ENCODE measurements at regions of chr3 and their contacts with region 1.

Region 1: GRCh38 chr3:108221911-108222852 is at the start of gene IFT57:
- DNase-seq: peak; percentile 89 to 98 (median 96)
- ATAC-seq: peak; percentile 90
- H3K4me3 Mint-ChIP-seq: peak within 1 kb of the TSS; percentile 95 to 100 (median 99)
- H3K27ac Mint-ChIP-seq: peak within 1 kb of the TSS; percentile 99 to 100 (median 100)
- H3K4me1 Mint-ChIP-seq: peaks cover 22 to 72% (median 54%) of the 10 kb centered on the region in 4 donors
- H3K27me3 Mint-ChIP-seq: no peaks in the 10 kb centered on the region
- polyA plus RNA-seq, gene IFT57: 19.0 to 35.6 (median 27.0) TPM

Region 2: DNA sequence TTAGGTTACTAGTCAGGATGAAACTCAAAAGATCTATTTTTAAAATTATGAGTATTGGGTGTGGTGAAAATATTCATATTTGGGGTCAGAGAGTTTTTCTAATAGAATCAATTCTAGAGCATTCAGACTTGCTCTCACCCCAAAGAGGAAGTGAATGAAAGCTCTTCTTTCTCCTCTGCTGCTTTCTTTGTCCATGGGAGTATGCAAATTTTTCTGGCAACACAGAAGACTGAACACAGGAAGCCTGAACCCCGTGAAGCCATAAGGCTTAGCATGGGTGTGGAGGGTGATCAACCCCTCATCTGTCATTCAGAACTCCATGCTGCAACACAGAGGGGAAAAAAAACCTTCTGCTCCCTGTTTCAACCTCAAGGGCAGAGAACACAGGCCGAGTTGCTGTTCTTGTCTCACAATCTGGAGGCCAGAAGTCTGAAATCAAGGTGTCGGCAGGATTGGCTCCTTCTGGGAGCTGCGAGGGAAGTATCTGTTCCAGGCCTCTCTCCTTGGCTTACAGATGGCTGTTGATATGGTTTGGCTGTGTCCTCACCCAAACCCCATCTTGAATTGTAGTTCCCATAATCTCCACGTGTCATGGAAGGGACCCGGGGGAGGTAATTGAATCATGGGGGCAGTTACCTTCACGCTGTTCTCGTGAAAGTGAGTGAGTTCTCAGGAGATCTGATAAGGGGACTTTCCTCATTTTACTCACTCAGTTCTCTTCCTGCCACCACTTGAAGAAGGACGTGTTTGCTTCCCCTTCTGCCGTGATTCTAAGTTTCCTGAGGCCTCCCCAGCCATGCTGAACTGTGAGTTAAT is 97.6 kb before region 1 on chr3:
- POLR2A ChIA-PET with region 1: interaction called, 62 read pairs
- DNase-seq: peak; percentile 7 to 82 (median 64)
- ATAC-seq: peak; percentile 59 to 68
- H3K4me3 Mint-ChIP-seq: peak overlapping the region; percentile 73 to 98 (median 88)
- H3K27ac Mint-ChIP-seq: peak overlapping the region; percentile 95 to 100 (median 98)
- H3K4me1 Mint-ChIP-seq: peaks cover 37 to 91% (median 68%) of the 10 kb centered on the region in 4 donors
- H3K27me3 Mint-ChIP-seq: no peaks in the 10 kb centered on the region

Region 3: GRCh38 chr3:108159865-108160264 is 62.3 kb before region 1 on chr3:
- POLR2A ChIA-PET with region 1: no interaction called
- DNase-seq: no peak
- ATAC-seq: no peak
- H3K4me3 Mint-ChIP-seq: no peak overlapping the region
- H3K27ac Mint-ChIP-seq: peak overlapping the region in 1 of 10 donors; percentile 52
- H3K4me1 Mint-ChIP-seq: peaks cover 0 to 32% (median 5%) of the 10 kb centered on the region in 4 donors
- H3K27me3 Mint-ChIP-seq: no peaks in the 10 kb centered on the region

Region 4: DNA sequence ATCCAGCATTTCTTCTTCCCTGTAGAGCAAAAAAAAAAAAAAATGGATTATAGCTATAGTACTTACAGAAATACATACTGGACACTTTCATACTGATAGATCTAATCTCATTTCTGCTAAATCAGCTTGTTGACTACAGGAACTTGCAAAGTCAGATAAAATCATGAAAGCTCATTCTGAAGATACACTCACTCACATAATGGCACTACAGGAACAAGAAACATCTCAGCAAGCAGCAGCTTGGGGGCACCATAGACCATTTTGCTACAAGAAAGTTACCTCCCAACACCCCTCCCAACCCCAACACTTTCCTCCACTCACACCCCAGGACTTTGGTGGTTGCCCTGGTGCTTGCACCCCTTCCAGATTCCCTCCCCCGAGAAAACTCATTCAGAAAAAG is 283.6 kb after region 1 on chr3:
- POLR2A ChIA-PET with region 1: no interaction called
- DNase-seq: no peak
- ATAC-seq: no peak
- H3K4me3 Mint-ChIP-seq: no peak overlapping the region
- H3K27ac Mint-ChIP-seq: no peak overlapping the region
- H3K4me1 Mint-ChIP-seq: no peaks in the 10 kb centered on the region
- H3K27me3 Mint-ChIP-seq: peaks cover 0 to 8% (median 1%) of the 10 kb centered on the region in 5 donors